GM12878 (cell line): ENCODE measurements at regions of chr4 and their contacts with region 1.

Region 1: GRCh38 chr4:38782452-38783108 is at the start of gene TLR10:
- DNase-seq: peak; percentile 82
- ATAC-seq: peak; percentile 74
- H3K4me3 ChIP-seq: peak within 1 kb of the TSS; percentile 81
- H3K27ac ChIP-seq: peak within 1 kb of the TSS; percentile 96
- H3K4me1 ChIP-seq: peaks cover 22% of the 10 kb centered on the region
- H3K27me3 ChIP-seq: no peaks in the 10 kb centered on the region
- CTCF ChIP-seq: peak; percentile 60 to 68 (median 63)
- EP300 ChIP-seq: no peak
- POLR2A ChIP-seq: peak; percentile 72
- RAD21 ChIP-seq: peak; percentile 83
- polyA plus RNA-seq, gene TLR10: 31.5 to 41.8 TPM

Region 2: DNA sequence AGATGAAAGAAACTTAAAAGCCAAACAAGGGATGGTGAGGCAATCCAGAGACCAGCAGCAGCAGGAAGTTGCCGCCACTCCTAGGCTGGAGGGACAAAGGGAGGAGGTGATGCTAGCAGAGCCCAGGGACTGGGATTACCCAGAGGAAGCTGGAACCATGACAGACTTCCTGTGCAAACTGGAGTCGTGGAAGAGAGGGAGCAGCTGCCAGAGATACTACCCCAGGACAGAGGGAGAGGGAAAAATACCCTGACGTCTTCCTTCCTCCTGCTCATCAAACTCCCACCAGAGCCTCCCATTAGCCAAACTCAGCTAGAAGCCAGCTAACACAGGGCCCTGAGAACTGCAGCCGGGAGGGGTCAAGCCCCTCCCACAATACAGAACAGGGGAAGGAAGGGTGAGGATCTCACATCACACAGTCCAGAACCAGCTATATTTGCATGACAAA is 219.8 kb before region 1 on chr4:
- CTCF ChIA-PET with region 1: no interaction called
- POLR2A ChIA-PET with region 1: no interaction called
- RAD21 ChIA-PET with region 1: no interaction called
- SMC1A ChIA-PET with region 1: no interaction called
- in situ Hi-C with region 1: no loop called
- intact Hi-C with region 1: no loop called
- DNase-seq: no peak
- ATAC-seq: no peak
- H3K4me3 ChIP-seq: no peak overlapping the region
- H3K27ac ChIP-seq: no peak overlapping the region
- H3K4me1 ChIP-seq: peaks cover 21% of the 10 kb centered on the region
- H3K27me3 ChIP-seq: no peaks in the 10 kb centered on the region
- CTCF ChIP-seq: no peak
- EP300 ChIP-seq: no peak
- POLR2A ChIP-seq: no peak
- RAD21 ChIP-seq: no peak

Region 3: GRCh38 chr4:38730830-38731646 is 51.5 kb before region 1 on chr4:
- CTCF ChIA-PET with region 1: interaction called, 8 read pairs
- POLR2A ChIA-PET with region 1: interaction called, 4 read pairs
- RAD21 ChIA-PET with region 1: interaction called, 15 read pairs
- SMC1A ChIA-PET with region 1: interaction called, 7 read pairs
- in situ Hi-C with region 1: no loop called
- intact Hi-C with region 1: no loop called
- DNase-seq: peak; percentile 87
- ATAC-seq: peak; percentile 97
- H3K4me3 ChIP-seq: no peak overlapping the region
- H3K27ac ChIP-seq: peak overlapping the region; percentile 57
- H3K4me1 ChIP-seq: peaks cover 16% of the 10 kb centered on the region
- H3K27me3 ChIP-seq: no peaks in the 10 kb centered on the region; a peak in 1 of 4 replicates
- CTCF ChIP-seq: peak; percentile 69 to 96 (median 89)
- EP300 ChIP-seq: peak; percentile 75 to 91; a peak in 3 of 4 replicates
- POLR2A ChIP-seq: no peak
- RAD21 ChIP-seq: peak; percentile 97

Region 4: DNA sequence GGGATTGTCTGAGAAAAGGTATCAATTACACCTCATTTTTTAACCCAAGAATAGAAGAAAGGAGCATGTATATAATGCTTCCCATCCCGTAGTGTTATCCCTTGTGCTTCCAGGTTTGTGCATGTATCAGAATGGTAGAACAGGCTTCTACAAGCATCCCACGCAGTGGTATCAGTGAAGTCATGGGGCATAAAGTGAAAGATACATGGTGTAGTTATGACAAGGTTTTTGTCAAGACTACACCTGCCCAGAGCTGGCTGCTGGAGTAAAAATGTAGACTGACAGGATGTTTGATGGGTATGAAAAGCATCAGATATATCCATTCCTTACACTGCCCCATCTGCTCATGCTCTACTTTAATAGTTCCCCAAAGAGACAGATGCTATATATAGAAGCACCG is 12.5 kb after region 1 on chr4:
- CTCF ChIA-PET with region 1: interaction called, 175 read pairs
- POLR2A ChIA-PET with region 1: interaction called, 107 read pairs
- RAD21 ChIA-PET with region 1: interaction called, 199 read pairs
- SMC1A ChIA-PET with region 1: interaction called, 278 read pairs
- in situ Hi-C with region 1: no loop called
- intact Hi-C with region 1: no loop called
- DNase-seq: no peak
- ATAC-seq: peak; percentile 26
- H3K4me3 ChIP-seq: no peak overlapping the region
- H3K27ac ChIP-seq: no peak overlapping the region
- H3K4me1 ChIP-seq: peaks cover 5% of the 10 kb centered on the region; the same call in 1 of the 2 replicates
- H3K27me3 ChIP-seq: no peaks in the 10 kb centered on the region
- CTCF ChIP-seq: no peak
- EP300 ChIP-seq: no peak
- POLR2A ChIP-seq: no peak
- RAD21 ChIP-seq: no peak

Region 5: GRCh38 chr4:38818441-38818976 is 35.9 kb after region 1 on chr4:
- CTCF ChIA-PET with region 1: interaction called, 32 read pairs
- POLR2A ChIA-PET with region 1: interaction called, 32 read pairs
- RAD21 ChIA-PET with region 1: interaction called, 52 read pairs
- SMC1A ChIA-PET with region 1: interaction called, 60 read pairs
- in situ Hi-C with region 1: no loop called
- intact Hi-C with region 1: loop called (anchors 5 kb)
- DNase-seq: peak; percentile 81
- ATAC-seq: peak; percentile 76
- H3K4me3 ChIP-seq: no peak overlapping the region
- H3K27ac ChIP-seq: peak overlapping the region; percentile 96
- H3K4me1 ChIP-seq: peaks cover 40% of the 10 kb centered on the region
- H3K27me3 ChIP-seq: no peaks in the 10 kb centered on the region
- CTCF ChIP-seq: no peak
- EP300 ChIP-seq: peak; percentile 94 to 96; a peak in 3 of 4 replicates
- POLR2A ChIP-seq: no peak; the same call in 1 of the 2 replicates
- RAD21 ChIP-seq: no peak

Region 6: GRCh38 chr4:38889143-38889542 is 106.6 kb after region 1 on chr4:
- CTCF ChIA-PET with region 1: interaction called, 15 read pairs
- POLR2A ChIA-PET with region 1: interaction called, 8 read pairs
- RAD21 ChIA-PET with region 1: interaction called, 35 read pairs
- SMC1A ChIA-PET with region 1: interaction called, 28 read pairs
- in situ Hi-C with region 1: no loop called
- intact Hi-C with region 1: no loop called
- DNase-seq: peak; percentile 58
- ATAC-seq: peak; percentile 85
- H3K4me3 ChIP-seq: no peak overlapping the region
- H3K27ac ChIP-seq: peak overlapping the region; percentile 64; the same call in 1 of the 2 replicates
- H3K4me1 ChIP-seq: peaks cover 4% of the 10 kb centered on the region
- H3K27me3 ChIP-seq: no peaks in the 10 kb centered on the region
- CTCF ChIP-seq: no peak
- EP300 ChIP-seq: peak; percentile 68 to 86; a peak in 3 of 4 replicates
- POLR2A ChIP-seq: no peak
- RAD21 ChIP-seq: no peak

Region 7: DNA sequence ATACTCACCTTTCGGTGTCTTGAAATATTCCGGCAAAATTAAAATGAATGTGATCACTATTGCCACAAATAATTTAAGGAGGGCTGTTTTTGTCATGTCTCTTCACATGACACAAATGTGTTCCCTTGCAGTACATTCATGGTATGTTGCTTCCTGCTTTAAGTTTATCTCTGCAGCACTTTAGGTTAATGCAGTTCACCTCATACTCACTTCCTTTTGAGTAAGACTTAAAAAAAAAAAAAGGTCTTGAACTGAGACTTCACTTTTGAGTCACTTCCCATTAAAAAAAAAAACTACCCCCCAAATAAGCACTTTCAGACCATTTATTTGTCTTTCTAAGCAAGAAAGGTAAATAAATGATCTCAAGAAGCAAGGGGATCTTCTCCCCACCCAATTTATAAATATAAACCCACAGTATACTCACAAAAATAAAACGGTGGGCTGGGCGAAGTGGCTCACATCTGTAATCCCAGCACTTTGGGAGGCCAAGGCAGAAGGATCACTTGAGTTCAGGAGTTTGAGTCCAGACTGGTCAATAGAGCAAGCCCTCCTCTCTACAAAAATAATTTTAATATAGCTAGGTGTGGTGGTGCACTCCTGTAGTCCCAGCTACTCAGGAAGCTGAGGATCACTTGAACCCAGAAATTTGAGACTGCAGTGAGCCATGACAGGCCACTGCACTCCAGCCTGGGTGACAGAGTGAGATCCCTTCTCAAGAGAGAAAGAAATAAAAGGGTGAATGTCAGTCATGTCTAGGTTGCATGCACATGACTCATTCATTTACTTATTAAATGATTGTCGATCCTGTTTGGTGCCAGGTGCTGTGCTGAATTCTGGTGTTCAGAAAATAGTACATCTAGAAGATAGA is 249.9 kb after region 1 on chr4 and contains the start of gene TMEM156:
- CTCF ChIA-PET with region 1: no interaction called
- POLR2A ChIA-PET with region 1: no interaction called
- RAD21 ChIA-PET with region 1: interaction called, 13 read pairs
- SMC1A ChIA-PET with region 1: interaction called, 7 read pairs
- in situ Hi-C with region 1: no loop called
- intact Hi-C with region 1: no loop called
- DNase-seq: peak; percentile 82
- ATAC-seq: peak; percentile 70
- H3K4me3 ChIP-seq: peak within 1 kb of the TSS; percentile 79
- H3K27ac ChIP-seq: peak within 1 kb of the TSS; percentile 88
- H3K4me1 ChIP-seq: peaks cover 28% of the 10 kb centered on the region
- H3K27me3 ChIP-seq: no peaks in the 10 kb centered on the region
- CTCF ChIP-seq: no peak
- EP300 ChIP-seq: peak; percentile 56 to 90; a peak in 2 of 4 replicates
- POLR2A ChIP-seq: peak; percentile 39; the same call in 1 of the 2 replicates
- RAD21 ChIP-seq: no peak
- polyA plus RNA-seq, gene TMEM156: 35.0 to 36.2 TPM